ENCODE measurements at regions of chr17 and their contacts with region 1.

Region 1: GRCh38 chr17:7614422-7615264 is at the start of gene FXR2:
- DNase-seq: peak; percentile 100
- ATAC-seq: peak; percentile 89
- H3K4me3 ChIP-seq: peak within 1 kb of the TSS; percentile 73 to 82 (median 76)
- H3K4me3 Mint-ChIP-seq: peak within 1 kb of the TSS; percentile 88
- H3K27ac ChIP-seq: peak within 1 kb of the TSS; percentile 67 to 85
- H3K27ac Mint-ChIP-seq: peak within 1 kb of the TSS; percentile 93
- H3K4me1 ChIP-seq: peaks cover 12 to 26% of the 10 kb centered on the region in 2 donors
- H3K4me1 Mint-ChIP-seq: peaks cover 22% of the 10 kb centered on the region
- H3K27me3 ChIP-seq: no peaks in the 10 kb centered on the region
- H3K27me3 Mint-ChIP-seq: no peaks in the 10 kb centered on the region
- CTCF ChIP-seq: peak; percentile 64
- total RNA-seq, gene FXR2: 44.7 and 45.8 TPM in 2 replicates

Region 2: GRCh38 chr17:7394452-7395191 is 220.0 kb before region 1 on chr17 and contains the start of gene PLSCR3:
- CTCF ChIA-PET with region 1: no interaction called
- POLR2A ChIA-PET with region 1: no interaction called
- intact Hi-C with region 1: no loop called
- DNase-seq: peak; percentile 90
- ATAC-seq: peak; percentile 89
- H3K4me3 ChIP-seq: peak within 1 kb of the TSS; percentile 31 to 84 (median 81)
- H3K4me3 Mint-ChIP-seq: peak within 1 kb of the TSS; percentile 96
- H3K27ac ChIP-seq: peak within 1 kb of the TSS; percentile 55 to 83
- H3K27ac Mint-ChIP-seq: peak within 1 kb of the TSS; percentile 95
- H3K4me1 ChIP-seq: peaks cover 12 to 16% of the 10 kb centered on the region in 2 donors
- H3K4me1 Mint-ChIP-seq: peaks cover 12% of the 10 kb centered on the region
- H3K27me3 ChIP-seq: no peaks in the 10 kb centered on the region
- H3K27me3 Mint-ChIP-seq: no peaks in the 10 kb centered on the region
- CTCF ChIP-seq: peak; percentile 20
- total RNA-seq, gene PLSCR3: 31.1 and 31.6 TPM in 2 replicates

Region 3: DNA sequence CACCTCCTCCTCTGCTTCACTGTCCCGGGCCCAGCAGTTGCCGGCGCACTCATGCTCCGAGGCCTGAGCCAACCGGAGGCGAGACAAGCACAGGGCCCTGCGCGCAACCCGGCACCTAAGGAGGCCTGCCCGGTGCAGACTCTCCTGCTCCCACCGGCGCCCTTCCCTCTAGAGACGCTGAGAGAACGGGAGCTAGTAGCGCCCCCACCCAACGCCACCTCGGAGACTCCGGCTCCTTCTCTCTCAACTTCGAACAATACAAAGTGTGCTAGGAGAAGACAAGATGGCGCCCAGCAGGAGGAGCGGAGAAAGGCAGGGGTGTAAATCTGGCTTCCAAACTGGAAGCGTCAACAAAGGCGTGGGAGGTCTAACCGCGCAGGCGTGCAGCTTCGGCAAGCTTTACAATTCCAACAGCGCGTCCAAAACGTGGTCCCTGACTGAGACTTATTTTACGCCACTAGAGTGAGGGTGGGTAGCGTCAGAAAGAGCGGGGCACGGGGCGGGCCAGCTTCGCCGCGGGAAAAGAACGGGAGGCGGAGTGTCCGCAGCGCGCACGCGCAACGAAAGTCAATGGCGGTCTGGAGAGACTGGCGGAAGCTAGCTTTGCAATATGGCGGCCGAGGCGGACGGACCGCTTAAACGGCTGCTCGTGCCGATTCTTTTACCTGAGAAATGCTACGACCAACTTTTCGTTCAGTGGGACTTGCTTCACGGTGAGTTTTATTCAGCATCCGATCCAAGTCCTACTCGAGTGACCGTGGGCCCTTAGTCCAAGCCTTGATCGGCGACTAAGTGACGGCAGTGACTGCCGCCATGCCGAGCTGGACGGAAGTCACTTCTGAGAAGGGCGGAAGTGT is 31.2 kb before region 1 on chr17 and contains the start of gene MPDU1:
- CTCF ChIA-PET with region 1: interaction called, 4 read pairs
- POLR2A ChIA-PET with region 1: interaction called, 6 read pairs
- intact Hi-C with region 1: loop called (anchors 1 kb)
- DNase-seq: peak; percentile 98
- ATAC-seq: peak; percentile 78
- H3K4me3 ChIP-seq: peak within 1 kb of the TSS; percentile 77 to 96 (median 86)
- H3K4me3 Mint-ChIP-seq: peak within 1 kb of the TSS; percentile 100
- H3K27ac ChIP-seq: peak within 1 kb of the TSS; percentile 91 to 95
- H3K27ac Mint-ChIP-seq: peak within 1 kb of the TSS; percentile 100
- H3K4me1 ChIP-seq: peaks cover 48 to 68% of the 10 kb centered on the region in 2 donors
- H3K4me1 Mint-ChIP-seq: peaks cover 57% of the 10 kb centered on the region
- H3K27me3 ChIP-seq: no peaks in the 10 kb centered on the region
- H3K27me3 Mint-ChIP-seq: no peaks in the 10 kb centered on the region
- CTCF ChIP-seq: no peak
- total RNA-seq, gene MPDU1: 29.7 and 31.7 TPM in 2 replicates

Region 4: GRCh38 chr17:7589204-7589868 is 25.3 kb before region 1 on chr17:
- CTCF ChIA-PET with region 1: interaction called, 10 read pairs
- POLR2A ChIA-PET with region 1: no interaction called
- intact Hi-C with region 1: loop called (anchors 1 kb)
- DNase-seq: peak; percentile 84
- ATAC-seq: peak; percentile 86
- H3K4me3 ChIP-seq: no peak overlapping the region
- H3K4me3 Mint-ChIP-seq: no peak overlapping the region
- H3K27ac ChIP-seq: no peak overlapping the region
- H3K27ac Mint-ChIP-seq: no peak overlapping the region
- H3K4me1 ChIP-seq: peaks cover 7 to 21% of the 10 kb centered on the region in 2 donors
- H3K4me1 Mint-ChIP-seq: peaks cover 10% of the 10 kb centered on the region
- H3K27me3 ChIP-seq: no peaks in the 10 kb centered on the region
- H3K27me3 Mint-ChIP-seq: no peaks in the 10 kb centered on the region
- CTCF ChIP-seq: peak; percentile 91

Region 5: GRCh38 chr17:7627250-7628121 is 12.8 kb after region 1 on chr17 and contains the start of gene SAT2:
- CTCF ChIA-PET with region 1: interaction called, 11 read pairs
- POLR2A ChIA-PET with region 1: interaction called, 18 read pairs
- intact Hi-C with region 1: loop called (anchors 1 kb)
- DNase-seq: peak; percentile 92
- ATAC-seq: peak; percentile 99
- H3K4me3 ChIP-seq: peak within 1 kb of the TSS; percentile 55 to 97 (median 89)
- H3K4me3 Mint-ChIP-seq: peak within 1 kb of the TSS; percentile 93
- H3K27ac ChIP-seq: peak within 1 kb of the TSS; percentile 79 to 88
- H3K27ac Mint-ChIP-seq: peak within 1 kb of the TSS; percentile 92
- H3K4me1 ChIP-seq: peaks cover 6 to 14% of the 10 kb centered on the region in 2 donors
- H3K4me1 Mint-ChIP-seq: peaks cover 17% of the 10 kb centered on the region
- H3K27me3 ChIP-seq: no peaks in the 10 kb centered on the region
- H3K27me3 Mint-ChIP-seq: no peaks in the 10 kb centered on the region
- CTCF ChIP-seq: no peak
- total RNA-seq, gene SAT2: 68.8 and 83.6 TPM in 2 replicates

Region 6: GRCh38 chr17:7650509-7651096 is 36.0 kb after region 1 on chr17 and contains the start of gene ATP1B2:
- CTCF ChIA-PET with region 1: interaction called, 6 read pairs
- POLR2A ChIA-PET with region 1: interaction called, 11 read pairs
- intact Hi-C with region 1: loop called (anchors 1 kb)
- DNase-seq: peak; percentile 87
- ATAC-seq: peak; percentile 85
- H3K4me3 ChIP-seq: peak within 1 kb of the TSS; percentile 26 to 74 (median 47)
- H3K4me3 Mint-ChIP-seq: peak within 1 kb of the TSS; percentile 91
- H3K27ac ChIP-seq: no peak within 1 kb of the TSS
- H3K27ac Mint-ChIP-seq: peak within 1 kb of the TSS; percentile 20
- H3K4me1 ChIP-seq: peaks cover 20 to 24% of the 10 kb centered on the region in 2 donors
- H3K4me1 Mint-ChIP-seq: peaks cover 19% of the 10 kb centered on the region
- H3K27me3 ChIP-seq: peaks cover 0 to 53% (median 29%) of the 10 kb centered on the region in 4 experiments
- H3K27me3 Mint-ChIP-seq: peaks cover 49% of the 10 kb centered on the region
- CTCF ChIP-seq: no peak
- total RNA-seq, gene ATP1B2: 0.27 and 0.39 TPM in 2 replicates

Region 7: DNA sequence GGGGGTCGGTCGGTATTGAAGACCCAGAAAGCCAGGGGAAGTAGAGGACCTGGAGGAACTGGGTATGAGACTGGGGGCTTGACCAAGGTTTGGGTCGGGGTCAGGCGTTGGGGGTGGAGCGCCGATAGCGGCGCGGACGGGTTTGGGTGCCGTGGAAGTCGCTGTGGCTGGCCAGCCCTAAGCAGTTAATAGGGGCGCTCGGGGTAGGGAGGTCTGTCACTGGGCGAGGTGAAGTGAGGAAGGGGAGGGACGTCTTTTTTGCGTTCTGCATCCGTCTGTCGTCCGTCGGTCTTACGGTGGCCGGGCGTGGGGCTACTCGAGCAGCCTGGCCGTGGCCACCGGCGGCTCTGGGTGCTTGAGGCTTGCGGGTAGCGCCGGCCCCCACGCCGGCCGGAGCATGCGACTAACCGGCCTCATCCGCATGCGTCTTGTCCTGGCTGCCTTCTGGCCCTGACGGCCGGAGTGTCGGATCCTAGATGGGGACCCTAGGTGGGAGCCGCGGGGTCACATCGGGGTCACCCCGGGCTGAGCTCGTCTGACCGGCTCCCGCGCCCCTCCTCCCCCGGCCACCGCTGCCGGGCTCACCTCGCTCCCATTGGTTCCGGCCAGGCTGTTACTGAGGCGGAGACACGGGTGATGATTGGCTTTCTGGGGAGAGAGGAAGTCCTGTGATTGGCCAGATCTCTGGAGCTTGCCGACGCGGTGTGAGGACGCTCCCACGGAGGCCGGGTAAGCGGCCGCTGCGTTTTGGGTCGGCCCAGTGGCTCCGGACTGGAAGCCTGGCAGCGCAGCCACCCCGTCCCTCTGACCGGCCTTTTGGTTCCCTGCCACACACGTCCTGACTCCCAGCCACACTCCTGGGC is 229.9 kb after region 1 on chr17:
- CTCF ChIA-PET with region 1: no interaction called
- POLR2A ChIA-PET with region 1: no interaction called
- intact Hi-C with region 1: loop called (anchors 10 kb)
- DNase-seq: peak; percentile 93
- ATAC-seq: peak; percentile 41
- H3K4me3 ChIP-seq: peak overlapping the region; percentile 67 to 95 (median 93)
- H3K4me3 Mint-ChIP-seq: peak overlapping the region; percentile 100
- H3K27ac ChIP-seq: peak overlapping the region; percentile 100
- H3K27ac Mint-ChIP-seq: peak overlapping the region; percentile 100
- H3K4me1 ChIP-seq: peaks cover 20 to 49% of the 10 kb centered on the region in 2 donors
- H3K4me1 Mint-ChIP-seq: peaks cover 39% of the 10 kb centered on the region
- H3K27me3 ChIP-seq: no peaks in the 10 kb centered on the region
- H3K27me3 Mint-ChIP-seq: no peaks in the 10 kb centered on the region
- CTCF ChIP-seq: no peak

Measured in B cell (primary cell).